Pancreas (tissue), 10 donors: ENCODE measurements at regions of chr1 and their contacts with region 1.

Region 1: GRCh38 chr1:246699095-246699735 is 25.0 kb upstream of the SCCPDH start:
- DNase-seq: peak; percentile 58 to 88 (median 84)
- ATAC-seq: peak; percentile 76 to 96 (median 88)
- H3K4me3 ChIP-seq: peak overlapping the region in 2 of 4 donors; percentile 20 to 30
- H3K27ac ChIP-seq: peak overlapping the region in 1 of 4 donors; percentile 39
- H3K4me1 ChIP-seq: peaks cover 0 to 8% (median 2%) of the 10 kb centered on the region in 3 donors
- H3K27me3 ChIP-seq: no peaks in the 10 kb centered on the region
- CTCF ChIP-seq: peak; percentile 73 to 80 (median 76)

Region 2: DNA sequence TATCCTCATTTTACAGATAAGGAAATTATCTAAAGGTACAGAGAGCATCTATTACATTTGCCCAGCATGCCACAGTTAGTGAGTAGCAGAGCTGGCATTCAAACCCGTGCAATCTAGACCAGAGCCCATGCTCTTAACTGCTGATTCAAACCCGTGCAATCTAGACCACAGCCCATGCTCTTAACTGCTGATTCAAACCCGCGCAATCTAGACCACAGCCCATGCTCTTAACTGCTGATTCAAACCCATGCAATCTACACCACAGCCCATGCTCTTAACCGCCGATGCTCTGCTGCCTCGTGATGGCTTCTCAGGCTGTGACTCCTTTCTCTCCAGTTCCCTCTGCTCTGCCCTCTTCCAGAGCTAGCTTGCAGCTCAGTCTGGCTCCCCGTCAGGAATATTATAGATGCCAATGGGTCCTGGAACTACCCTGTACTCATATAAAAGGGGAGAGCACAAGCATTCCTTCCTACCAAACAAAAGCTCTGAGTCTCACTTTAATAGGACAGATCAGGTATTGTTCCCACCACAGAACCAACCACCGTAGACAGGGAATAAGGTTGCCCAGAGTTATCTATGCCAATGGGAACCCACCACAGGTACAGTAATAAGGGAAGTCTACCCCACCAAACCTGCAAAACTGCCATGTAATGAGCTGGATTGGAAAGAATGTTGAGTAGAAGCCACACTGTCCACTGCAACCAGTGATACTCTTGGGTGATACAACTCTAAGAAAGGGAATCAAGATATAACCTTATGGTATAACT is 270.5 kb before region 1 on chr1:
- intact Hi-C with region 1: no loop called
- DNase-seq: no peak
- ATAC-seq: no peak
- H3K4me3 ChIP-seq: no peak overlapping the region
- H3K27ac ChIP-seq: no peak overlapping the region
- H3K4me1 ChIP-seq: no peaks in the 10 kb centered on the region
- H3K27me3 ChIP-seq: no peaks in the 10 kb centered on the region
- CTCF ChIP-seq: no peak

Region 3: DNA sequence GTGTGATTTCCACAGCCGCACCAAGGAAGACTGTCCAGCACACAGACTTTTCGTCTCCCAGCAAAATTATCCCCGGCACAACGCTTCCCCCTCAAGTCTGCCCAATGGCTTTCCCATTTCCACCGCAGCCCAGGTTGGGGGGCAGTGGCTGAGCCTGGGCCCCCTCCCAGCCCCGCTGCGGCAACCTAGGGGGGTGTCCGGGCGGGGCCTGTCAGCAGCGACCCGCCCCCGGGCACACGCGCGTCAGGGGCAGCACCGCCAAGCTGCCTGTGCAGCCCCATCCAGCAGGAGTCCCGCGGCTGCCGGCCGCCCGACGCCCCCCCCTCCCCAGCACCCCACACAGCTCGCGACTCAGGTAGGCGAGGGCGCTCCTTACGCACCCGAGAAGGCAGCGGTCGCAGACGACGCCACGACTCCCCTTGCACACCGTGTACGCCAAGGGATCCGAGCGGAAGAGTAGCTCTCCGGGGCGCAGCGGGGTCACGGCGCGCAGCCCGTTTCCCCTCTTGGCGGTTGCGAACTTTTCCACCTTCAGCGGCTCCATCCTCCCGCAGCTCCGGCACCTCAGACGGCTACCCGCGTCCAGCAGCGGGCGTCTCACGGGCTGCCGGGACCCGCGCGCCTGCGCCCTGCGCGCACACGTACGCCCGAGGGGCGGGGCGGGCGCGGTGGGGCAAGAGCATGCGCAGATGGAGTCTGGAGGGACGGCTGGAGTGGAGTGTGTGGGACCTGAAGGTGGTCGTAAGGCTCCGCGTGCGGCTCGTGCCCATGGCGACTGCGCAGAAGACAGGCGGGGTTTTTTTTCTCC is 192.3 kb before region 1 on chr1 and contains the start of gene SMYD3:
- intact Hi-C with region 1: loop called in 1 of 3 experiments (anchors 10 kb)
- DNase-seq: peak; percentile 68 to 93 (median 79)
- ATAC-seq: peak; percentile 98 to 99 (median 99)
- H3K4me3 ChIP-seq: peak within 1 kb of the TSS; percentile 58 to 93 (median 80)
- H3K27ac ChIP-seq: peak within 1 kb of the TSS in 3 of 4 donors; percentile 0 to 24 (median 15)
- H3K4me1 ChIP-seq: peaks cover 0 to 5% (median 0%) of the 10 kb centered on the region in 3 donors
- H3K27me3 ChIP-seq: no peaks in the 10 kb centered on the region
- CTCF ChIP-seq: no peak
- total RNA-seq, gene SMYD3: 4.6 to 10.5 (median 6.7) TPM